BJ (cell line): ENCODE measurements at regions of chr16 and their contacts with region 1.

Region 1: DNA sequence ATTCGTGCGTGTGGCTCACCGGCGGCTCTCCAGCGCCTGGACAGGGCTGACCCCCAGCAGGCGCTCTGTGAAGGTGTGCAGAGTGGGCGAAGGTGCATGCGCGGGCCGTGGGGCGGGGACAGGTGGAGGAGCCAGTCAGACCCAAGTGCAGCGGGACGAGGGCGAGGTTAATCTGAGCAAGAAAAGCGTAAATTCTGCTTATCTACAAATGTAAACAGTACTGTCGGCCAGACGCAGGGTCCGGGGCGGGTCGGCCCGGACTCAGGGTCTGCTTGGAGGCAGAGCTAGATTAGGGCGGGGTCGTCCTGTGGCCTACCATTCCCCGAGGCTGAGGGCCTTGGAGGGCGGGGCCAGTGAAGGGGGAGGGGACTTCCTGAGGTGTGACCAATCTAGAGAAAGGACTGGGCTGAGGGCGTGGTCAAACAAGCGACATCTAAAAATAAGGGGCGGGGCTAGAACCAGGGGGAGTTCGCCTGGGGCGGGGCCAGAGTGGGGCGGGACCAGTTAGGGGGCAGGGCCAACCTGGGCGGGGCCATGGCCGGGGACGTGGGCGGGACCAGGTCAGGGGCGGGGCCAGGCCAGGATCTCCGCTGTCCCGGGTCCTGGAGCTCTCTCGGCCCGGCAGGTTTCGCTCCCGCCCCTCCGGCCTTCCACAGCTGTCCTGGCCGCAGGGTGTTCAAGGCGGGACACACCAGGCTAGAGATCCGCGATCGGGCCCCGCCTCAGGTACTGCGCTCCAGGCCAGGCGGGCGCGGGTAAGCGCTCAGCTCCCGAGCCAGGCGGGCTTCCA is at the start of gene SEC14L5:
- DNase-seq: peak; percentile 67
- H3K4me3 ChIP-seq: peak within 1 kb of the TSS; percentile 60
- H3K27me3 ChIP-seq: no peaks in the 10 kb centered on the region
- CTCF ChIP-seq: no peak
- polyA plus RNA-seq, gene SEC14L5: not detected in 2 replicates

Region 2: DNA sequence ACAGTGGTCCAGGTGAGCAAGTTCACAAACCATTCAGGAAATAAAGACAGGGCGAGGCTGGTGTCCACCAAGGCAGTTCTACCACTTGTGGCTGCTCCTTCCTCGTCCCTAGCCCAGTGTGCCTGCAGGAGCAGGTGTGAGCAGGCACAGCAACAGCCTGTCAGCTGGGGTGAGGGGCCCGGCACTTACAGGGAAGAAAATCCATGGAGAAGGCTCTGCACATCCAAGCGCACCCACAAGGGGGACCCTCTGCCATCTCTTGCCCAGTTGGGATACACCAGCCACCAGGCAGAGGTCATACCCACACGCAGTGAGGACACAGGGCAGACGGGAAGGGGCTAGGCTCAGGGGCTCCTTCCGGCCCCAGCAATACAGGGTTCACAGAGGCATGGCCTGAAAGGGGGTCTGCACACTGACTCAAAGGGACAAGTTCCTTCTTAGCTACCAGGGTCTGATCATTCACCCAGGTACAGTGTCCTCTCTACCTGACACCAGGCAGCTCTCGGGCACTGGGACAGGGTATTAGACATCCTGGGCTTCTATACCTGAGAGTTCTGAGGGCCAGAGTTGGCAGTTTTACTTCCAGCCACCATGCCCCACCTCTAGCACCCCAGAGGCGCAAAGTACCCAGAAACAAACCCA is 446.4 kb before region 1 on chr16:
- CTCF ChIA-PET with region 1: no interaction called
- POLR2A ChIA-PET with region 1: no interaction called
- DNase-seq: no peak
- H3K4me3 ChIP-seq: no peak overlapping the region
- H3K27me3 ChIP-seq: no peaks in the 10 kb centered on the region
- CTCF ChIP-seq: peak; percentile 68

Region 3: GRCh38 chr16:4947722-4948503 is 10.0 kb before region 1 on chr16:
- CTCF ChIA-PET with region 1: interaction called, 5 read pairs
- POLR2A ChIA-PET with region 1: interaction called, 15 read pairs
- DNase-seq: no peak
- H3K4me3 ChIP-seq: no peak overlapping the region
- H3K27me3 ChIP-seq: no peaks in the 10 kb centered on the region
- CTCF ChIP-seq: no peak